ENCODE measurements at regions of chr17 and their contacts with region 1.

Region 1: DNA sequence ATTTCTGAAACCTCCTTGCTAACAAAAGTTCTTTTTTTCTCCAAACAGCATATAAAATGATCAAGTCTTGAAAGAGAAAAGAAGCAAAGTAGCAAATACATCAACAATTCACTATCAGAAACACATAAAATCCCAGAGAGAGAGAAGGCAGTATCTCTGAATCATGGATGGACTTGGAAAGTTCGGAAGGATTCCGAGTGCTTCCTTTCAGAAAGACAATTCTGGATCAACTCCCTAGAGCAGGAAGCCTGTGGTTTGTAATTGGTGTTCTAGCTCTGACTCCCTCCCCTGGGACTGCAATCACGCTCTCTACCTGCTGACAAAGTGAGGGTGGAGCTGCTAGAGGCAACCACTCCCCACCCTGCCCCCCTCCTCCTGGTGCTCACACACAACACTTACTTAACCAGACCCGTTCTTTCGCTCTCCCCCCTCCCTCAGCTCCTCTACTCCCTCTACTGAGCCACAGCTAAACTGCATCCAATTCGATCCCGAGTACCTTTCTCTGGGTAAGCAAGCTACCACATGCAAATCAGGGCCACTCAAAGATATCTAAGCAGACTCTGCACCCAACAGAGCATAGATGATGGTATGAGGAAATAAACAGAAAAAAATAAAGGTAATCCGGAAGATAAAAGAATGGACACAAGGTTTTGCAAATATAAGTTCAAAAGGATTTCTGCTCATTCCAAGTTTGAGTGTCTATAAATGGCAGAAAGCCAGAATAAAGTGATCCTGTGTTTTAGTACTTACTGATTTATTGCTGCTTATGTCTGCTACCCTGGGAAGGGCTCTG is at the start of gene RNF43:
- DNase-seq: peak; percentile 63
- ATAC-seq: peak; percentile 100
- H3K4me3 Mint-ChIP-seq: peak within 1 kb of the TSS; percentile 12
- H3K27ac Mint-ChIP-seq: peak within 1 kb of the TSS; percentile 64
- H3K4me1 Mint-ChIP-seq: peaks cover 21% of the 10 kb centered on the region
- H3K27me3 Mint-ChIP-seq: no peaks in the 10 kb centered on the region
- CTCF ChIP-seq: no peak
- total RNA-seq, gene RNF43: 1.5 and 2.1 TPM in 2 replicates

Region 2: GRCh38 chr17:58219001-58219788 is 198.3 kb before region 1 on chr17 and contains the start of gene MKS1:
- CTCF ChIA-PET with region 1: no interaction called
- POLR2A ChIA-PET with region 1: no interaction called
- intact Hi-C with region 1: loop called (anchors 1 kb)
- DNase-seq: peak; percentile 91
- ATAC-seq: peak; percentile 96
- H3K4me3 Mint-ChIP-seq: peak within 1 kb of the TSS; percentile 91
- H3K27ac Mint-ChIP-seq: peak within 1 kb of the TSS; percentile 96
- H3K4me1 Mint-ChIP-seq: peaks cover 43% of the 10 kb centered on the region
- H3K27me3 Mint-ChIP-seq: peaks cover 2% of the 10 kb centered on the region
- CTCF ChIP-seq: no peak
- total RNA-seq, gene MKS1: 16.0 and 17.3 TPM in 2 replicates

Region 3: GRCh38 chr17:58317421-58318064 is 100.0 kb before region 1 on chr17:
- CTCF ChIA-PET with region 1: interaction called, 83 read pairs
- POLR2A ChIA-PET with region 1: interaction called, 39 read pairs
- intact Hi-C with region 1: loop called (anchors 1 kb)
- DNase-seq: peak; percentile 55
- ATAC-seq: peak; percentile 97
- H3K4me3 Mint-ChIP-seq: no peak overlapping the region
- H3K27ac Mint-ChIP-seq: peak overlapping the region; percentile 79
- H3K4me1 Mint-ChIP-seq: peaks cover 15% of the 10 kb centered on the region
- H3K27me3 Mint-ChIP-seq: no peaks in the 10 kb centered on the region
- CTCF ChIP-seq: no peak

Region 4: DNA sequence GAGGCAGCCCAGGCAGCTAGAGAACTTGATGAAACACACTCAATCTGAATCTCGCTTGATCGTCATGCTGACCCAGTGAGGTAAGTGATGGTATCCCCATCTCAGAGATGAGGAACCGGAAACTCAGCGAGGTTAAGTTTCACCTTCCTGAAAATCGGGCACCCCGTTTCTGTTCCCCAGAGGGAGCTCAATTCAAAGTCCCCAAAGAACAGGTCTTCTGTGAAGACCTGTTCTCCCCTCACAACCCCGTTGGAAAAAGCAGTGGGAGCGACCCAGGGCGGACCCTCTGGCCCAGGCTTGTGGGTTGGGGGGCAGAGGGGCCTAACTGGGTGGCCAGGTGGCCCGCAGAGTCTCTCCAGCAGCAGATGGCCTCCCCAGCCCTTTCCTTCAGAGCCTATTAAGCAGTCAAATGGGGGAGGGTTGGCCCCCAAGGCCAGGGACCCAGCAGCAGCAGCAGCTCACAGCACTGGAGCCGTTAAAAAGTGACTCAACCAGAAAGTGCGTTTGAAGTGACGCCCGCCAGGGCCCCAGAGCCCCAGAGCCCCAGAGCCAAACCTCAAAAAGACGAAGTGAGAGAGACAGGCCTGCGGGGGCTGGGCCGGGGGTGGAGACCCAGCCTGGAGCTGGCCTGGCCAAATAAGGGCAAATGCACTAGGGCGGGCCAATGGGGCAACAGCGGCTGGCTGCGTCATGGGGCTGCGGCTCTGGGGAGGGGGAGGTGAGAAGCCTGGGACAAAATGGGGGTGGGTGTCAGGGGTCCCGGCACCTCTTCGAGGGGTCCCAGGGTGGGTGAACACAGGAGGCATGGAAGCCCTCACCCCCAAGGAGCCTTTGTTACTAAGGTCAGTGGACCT is 79.7 kb before region 1 on chr17:
- CTCF ChIA-PET with region 1: interaction called, 14 read pairs
- POLR2A ChIA-PET with region 1: interaction called, 191 read pairs
- intact Hi-C with region 1: no loop called
- DNase-seq: peak; percentile 84
- ATAC-seq: peak; percentile 63
- H3K4me3 Mint-ChIP-seq: peak overlapping the region; percentile 100
- H3K27ac Mint-ChIP-seq: peak overlapping the region; percentile 99
- H3K4me1 Mint-ChIP-seq: peaks cover 97% of the 10 kb centered on the region
- H3K27me3 Mint-ChIP-seq: no peaks in the 10 kb centered on the region
- CTCF ChIP-seq: no peak

Region 5: DNA sequence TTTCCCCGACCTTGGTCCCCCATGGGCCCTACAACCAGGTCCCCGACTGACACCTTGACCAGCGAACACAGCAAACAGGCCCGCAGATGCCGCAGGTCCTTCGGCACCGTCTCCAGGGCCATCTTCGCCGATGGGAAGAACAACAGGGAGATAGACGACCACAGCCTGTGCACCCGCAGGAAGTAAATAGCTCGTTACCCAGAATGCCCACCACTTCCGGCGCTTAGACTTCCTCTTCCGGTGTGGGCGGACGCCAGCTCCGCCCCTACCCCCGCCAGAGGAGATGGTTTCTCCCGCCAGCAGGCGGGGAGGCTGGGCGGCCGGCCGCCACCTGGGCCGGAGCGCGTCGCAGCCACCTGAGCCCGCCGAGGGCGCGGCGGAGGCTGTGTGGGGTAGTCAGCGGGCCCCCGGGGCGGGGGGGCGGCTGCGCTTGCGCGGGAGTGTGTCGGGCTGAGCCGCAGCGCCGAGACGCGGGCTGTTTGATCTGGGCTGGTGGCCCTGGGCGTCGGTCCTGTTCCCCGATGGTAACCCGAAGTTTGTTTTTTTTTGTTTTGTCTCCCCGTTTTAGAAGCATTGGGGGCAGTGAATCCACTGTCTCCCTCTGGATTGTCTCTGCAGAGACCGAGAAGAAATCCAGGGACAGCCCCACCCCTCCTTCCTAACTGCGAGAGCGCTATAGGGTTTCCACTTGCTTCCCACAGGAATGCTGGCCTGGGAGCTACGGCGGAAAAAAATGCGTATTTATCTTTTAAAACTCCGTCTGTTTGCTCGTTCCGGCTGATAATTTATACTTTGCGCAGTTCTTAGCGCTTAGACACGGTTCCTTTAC is 65.3 kb before region 1 on chr17 and contains the start of gene SUPT4H1:
- CTCF ChIA-PET with region 1: interaction called, 11 read pairs
- POLR2A ChIA-PET with region 1: interaction called, 46 read pairs
- intact Hi-C with region 1: loop called (anchors 1 kb)
- DNase-seq: peak; percentile 91
- ATAC-seq: peak; percentile 92
- H3K4me3 Mint-ChIP-seq: peak within 1 kb of the TSS; percentile 100
- H3K27ac Mint-ChIP-seq: peak within 1 kb of the TSS; percentile 97
- H3K4me1 Mint-ChIP-seq: peaks cover 49% of the 10 kb centered on the region
- H3K27me3 Mint-ChIP-seq: no peaks in the 10 kb centered on the region
- CTCF ChIP-seq: no peak
- total RNA-seq, gene SUPT4H1: 90.2 and 100 TPM in 2 replicates

Region 6: GRCh38 chr17:58394534-58395223 is 22.8 kb before region 1 on chr17:
- CTCF ChIA-PET with region 1: interaction called, 3 read pairs
- POLR2A ChIA-PET with region 1: no interaction called
- intact Hi-C with region 1: loop called (anchors 1 kb)
- DNase-seq: no peak
- ATAC-seq: no peak
- H3K4me3 Mint-ChIP-seq: no peak overlapping the region
- H3K27ac Mint-ChIP-seq: no peak overlapping the region
- H3K4me1 Mint-ChIP-seq: no peaks in the 10 kb centered on the region
- H3K27me3 Mint-ChIP-seq: no peaks in the 10 kb centered on the region
- CTCF ChIP-seq: no peak

Region 7: GRCh38 chr17:58913585-58914444 is 496.3 kb after region 1 on chr17:
- CTCF ChIA-PET with region 1: no interaction called
- POLR2A ChIA-PET with region 1: no interaction called
- intact Hi-C with region 1: no loop called
- DNase-seq: no peak
- ATAC-seq: no peak
- H3K4me3 Mint-ChIP-seq: no peak overlapping the region
- H3K27ac Mint-ChIP-seq: no peak overlapping the region
- H3K4me1 Mint-ChIP-seq: no peaks in the 10 kb centered on the region
- H3K27me3 Mint-ChIP-seq: no peaks in the 10 kb centered on the region
- CTCF ChIP-seq: no peak